IMR-90 (cell line): ENCODE measurements at regions of chr1 and their contacts with region 1.

Region 1: GRCh38 chr1:77683160-77684148 is 996 bp upstream of the ZZZ3 start:
- DNase-seq: peak; percentile 89
- ATAC-seq: peak; percentile 88
- H3K4me3 ChIP-seq: peak overlapping the region; percentile 80
- H3K27ac ChIP-seq: peak overlapping the region; percentile 97
- H3K4me1 ChIP-seq: no peaks in the 10 kb centered on the region; the same call in 1 of the 2 replicates
- H3K27me3 ChIP-seq: no peaks in the 10 kb centered on the region
- CTCF ChIP-seq: peak; percentile 89
- POLR2A ChIP-seq: 0 out of 2 replicates have a peak, but pooled peaks have one; percentile 17
- RAD21 ChIP-seq: peak; percentile 73

Region 2: GRCh38 chr1:77156214-77156613 is 527.2 kb before region 1 on chr1:
- CTCF ChIA-PET with region 1: no interaction called
- POLR2A ChIA-PET with region 1: no interaction called
- dilution Hi-C with region 1: no loop called
- in situ Hi-C with region 1: loop called (anchors 10 kb)
- intact Hi-C with region 1: no loop called
- DNase-seq: no peak
- ATAC-seq: no peak
- H3K4me3 ChIP-seq: no peak overlapping the region
- H3K27ac ChIP-seq: no peak overlapping the region
- H3K4me1 ChIP-seq: no peaks in the 10 kb centered on the region
- H3K27me3 ChIP-seq: no peaks in the 10 kb centered on the region
- CTCF ChIP-seq: no peak
- POLR2A ChIP-seq: no peak
- RAD21 ChIP-seq: no peak

Region 3: DNA sequence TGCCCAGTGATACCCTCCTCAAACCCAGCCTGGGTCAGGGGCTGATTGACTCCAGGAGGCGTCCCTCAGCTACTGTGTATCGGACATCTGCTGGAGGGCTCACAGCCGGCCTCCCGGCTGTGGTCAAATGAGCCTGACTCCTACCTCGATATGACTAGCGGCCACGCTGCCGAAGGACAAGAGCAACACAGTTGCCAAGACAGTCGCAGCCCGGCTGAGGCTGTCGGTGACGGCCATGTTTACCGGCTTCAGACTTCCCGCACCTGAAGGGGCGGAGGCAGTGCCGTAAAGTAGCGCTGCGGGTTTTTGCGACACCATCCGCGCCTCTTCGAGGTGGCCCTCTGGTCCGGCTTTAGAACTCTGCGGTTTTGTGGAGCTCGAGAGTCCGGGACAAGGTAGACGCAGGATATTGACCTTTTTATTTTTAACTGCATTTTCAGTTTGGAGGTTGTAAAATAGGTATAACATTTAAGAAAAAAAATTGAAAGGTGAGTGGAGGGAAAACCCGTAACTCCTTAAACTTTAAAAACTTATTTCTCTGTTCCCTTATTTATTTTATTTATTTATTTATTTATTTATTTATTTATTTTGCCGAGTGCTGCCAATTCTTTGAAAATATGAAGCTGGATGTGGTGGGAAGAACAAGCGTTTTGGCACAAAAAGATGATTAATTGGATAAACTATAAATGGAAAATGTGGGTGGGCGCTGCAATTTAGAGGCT is 464.1 kb before region 1 on chr1 and contains the start of gene PIGK:
- CTCF ChIA-PET with region 1: no interaction called
- POLR2A ChIA-PET with region 1: no interaction called
- dilution Hi-C with region 1: no loop called
- in situ Hi-C with region 1: no loop called
- intact Hi-C with region 1: loop called (anchors 5 kb)
- DNase-seq: peak; percentile 79
- ATAC-seq: peak; percentile 98
- H3K4me3 ChIP-seq: peak within 1 kb of the TSS; percentile 84
- H3K27ac ChIP-seq: peak within 1 kb of the TSS; percentile 47
- H3K4me1 ChIP-seq: no peaks in the 10 kb centered on the region
- H3K27me3 ChIP-seq: no peaks in the 10 kb centered on the region
- CTCF ChIP-seq: no peak
- POLR2A ChIP-seq: no peak
- RAD21 ChIP-seq: 0 out of 2 replicates have a peak, but pooled peaks have one; percentile 2
- total RNA-seq, gene PIGK: 15.6 and 39.2 TPM in 2 replicates

Region 4: GRCh38 chr1:77489910-77490309 is 193.5 kb before region 1 on chr1:
- CTCF ChIA-PET with region 1: no interaction called
- POLR2A ChIA-PET with region 1: no interaction called
- dilution Hi-C with region 1: no loop called
- in situ Hi-C with region 1: no loop called
- intact Hi-C with region 1: no loop called
- DNase-seq: peak; percentile 24
- ATAC-seq: no peak; the same call in 1 of the 2 replicates
- H3K4me3 ChIP-seq: no peak overlapping the region
- H3K27ac ChIP-seq: no peak overlapping the region
- H3K4me1 ChIP-seq: peaks cover 6% of the 10 kb centered on the region
- H3K27me3 ChIP-seq: no peaks in the 10 kb centered on the region
- CTCF ChIP-seq: no peak
- POLR2A ChIP-seq: no peak
- RAD21 ChIP-seq: no peak

Region 5: GRCh38 chr1:77524038-77524437 is 159.4 kb before region 1 on chr1:
- CTCF ChIA-PET with region 1: no interaction called
- POLR2A ChIA-PET with region 1: no interaction called
- dilution Hi-C with region 1: no loop called
- in situ Hi-C with region 1: no loop called
- intact Hi-C with region 1: no loop called
- DNase-seq: no peak
- ATAC-seq: no peak
- H3K4me3 ChIP-seq: no peak overlapping the region
- H3K27ac ChIP-seq: no peak overlapping the region
- H3K4me1 ChIP-seq: no peaks in the 10 kb centered on the region
- H3K27me3 ChIP-seq: no peaks in the 10 kb centered on the region
- CTCF ChIP-seq: no peak
- POLR2A ChIP-seq: no peak
- RAD21 ChIP-seq: no peak

Region 6: GRCh38 chr1:77538956-77539518 is 144.4 kb before region 1 on chr1:
- CTCF ChIA-PET with region 1: no interaction called
- POLR2A ChIA-PET with region 1: interaction called, 4 read pairs
- dilution Hi-C with region 1: no loop called
- in situ Hi-C with region 1: no loop called
- intact Hi-C with region 1: loop called (anchors 1 kb)
- DNase-seq: peak; percentile 93
- ATAC-seq: peak; percentile 78
- H3K4me3 ChIP-seq: no peak overlapping the region
- H3K27ac ChIP-seq: peak overlapping the region; percentile 84
- H3K4me1 ChIP-seq: peaks cover 23% of the 10 kb centered on the region
- H3K27me3 ChIP-seq: no peaks in the 10 kb centered on the region
- CTCF ChIP-seq: no peak
- POLR2A ChIP-seq: no peak
- RAD21 ChIP-seq: no peak

Region 7: GRCh38 chr1:78286686-78287085 is 603.2 kb after region 1 on chr1:
- CTCF ChIA-PET with region 1: no interaction called
- POLR2A ChIA-PET with region 1: no interaction called
- dilution Hi-C with region 1: no loop called
- in situ Hi-C with region 1: no loop called
- intact Hi-C with region 1: no loop called
- DNase-seq: peak; percentile 88
- ATAC-seq: peak; percentile 56
- H3K4me3 ChIP-seq: no peak overlapping the region
- H3K27ac ChIP-seq: peak overlapping the region; percentile 51
- H3K4me1 ChIP-seq: peaks cover 2% of the 10 kb centered on the region; the same call in 1 of the 2 replicates
- H3K27me3 ChIP-seq: no peaks in the 10 kb centered on the region
- CTCF ChIP-seq: no peak
- POLR2A ChIP-seq: no peak
- RAD21 ChIP-seq: no peak